ENCODE measurements at regions of chr1 and their contacts with region 1.

Region 1: DNA sequence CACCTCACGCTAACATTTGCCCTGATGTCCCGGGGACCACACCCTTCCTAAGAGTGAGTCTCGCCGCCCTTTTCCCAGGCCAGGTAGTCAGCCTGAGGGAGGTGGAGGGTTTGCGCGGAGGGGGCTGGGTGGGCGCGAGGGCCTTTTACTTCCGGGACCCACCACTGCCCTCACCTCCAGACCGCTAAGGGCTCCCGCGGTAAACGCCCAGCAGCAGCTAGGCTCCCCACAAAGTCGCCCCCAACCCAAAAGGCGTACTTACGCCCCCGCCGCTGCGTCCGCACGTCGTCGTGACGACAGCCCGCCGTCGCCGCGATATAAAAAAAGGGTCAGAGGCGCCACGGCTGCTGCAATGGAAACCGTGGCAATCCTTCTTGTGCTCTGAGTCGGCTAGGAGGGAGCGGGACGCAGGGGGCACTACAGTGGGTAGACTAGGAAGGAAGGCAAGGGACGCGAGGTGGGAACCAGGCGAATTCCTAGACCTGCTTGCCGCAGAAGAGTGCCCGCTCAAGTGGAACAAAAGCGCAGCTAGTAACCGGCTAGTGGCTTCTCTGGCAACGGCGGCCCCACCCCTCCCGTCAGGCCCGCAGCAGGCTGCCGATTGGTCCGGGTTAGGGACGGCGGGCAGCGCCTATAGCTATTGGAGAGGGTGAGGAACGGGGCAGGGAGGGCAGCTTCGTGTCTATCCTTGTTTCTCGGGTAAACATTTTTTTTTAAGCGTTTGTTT is at the start of gene ODF2L:
- DNase-seq: peak; percentile 90 to 95 (median 92)
- ATAC-seq: peak; percentile 99 to 100 (median 100)
- H3K4me3 ChIP-seq: peak within 1 kb of the TSS; percentile 55 to 95 (median 82)
- H3K27ac ChIP-seq: peak within 1 kb of the TSS in 11 of 12 donors; percentile 66 to 89 (median 81)
- H3K4me1 ChIP-seq: peaks cover 0 to 30% (median 12%) of the 10 kb centered on the region in 12 donors
- H3K27me3 ChIP-seq: no peaks in the 10 kb centered on the region
- CTCF ChIP-seq: no peak
- POLR2A ChIP-seq: peak in 1 of 2 donors; percentile 78
- total RNA-seq, gene ODF2L: 6.2 to 23.7 (median 12.3) TPM

Region 2: GRCh38 chr1:86305731-86306130 is 90.2 kb before region 1 on chr1:
- intact Hi-C with region 1: no loop called
- DNase-seq: no peak
- ATAC-seq: no peak
- H3K4me3 ChIP-seq: no peak overlapping the region
- H3K27ac ChIP-seq: no peak overlapping the region
- H3K4me1 ChIP-seq: no peaks in the 10 kb centered on the region
- H3K27me3 ChIP-seq: no peaks in the 10 kb centered on the region
- CTCF ChIP-seq: no peak
- POLR2A ChIP-seq: no peak

Region 3: DNA sequence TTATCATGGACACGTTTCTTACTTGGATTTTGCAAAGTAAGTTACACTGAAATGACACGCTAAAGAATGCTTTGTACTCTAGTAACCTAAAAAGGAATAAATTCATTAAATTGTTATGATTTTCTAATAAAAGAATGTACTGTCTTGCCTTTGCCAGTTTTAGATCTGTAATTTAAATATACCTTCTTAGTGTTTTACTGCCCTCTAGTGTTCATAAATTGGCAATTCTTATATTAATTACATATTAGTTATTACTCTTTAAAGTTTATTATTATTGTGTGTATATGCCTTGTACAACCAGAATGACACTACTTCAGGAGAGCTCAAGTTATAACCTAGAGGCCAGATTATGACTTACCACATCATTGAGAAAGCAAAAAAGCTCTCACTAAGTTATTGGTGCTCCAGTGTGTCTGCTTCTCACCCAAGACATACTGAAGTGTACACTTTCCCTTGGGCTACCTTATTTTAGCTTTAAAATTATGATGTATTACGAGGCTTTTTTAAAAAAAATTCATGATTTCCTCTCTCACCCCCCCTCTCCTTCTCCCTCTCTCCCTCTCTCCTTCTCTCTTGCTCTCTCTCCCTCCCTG is 688.4 kb after region 1 on chr1:
- intact Hi-C with region 1: loop called in 1 of 10 experiments (anchors 10 kb)
- DNase-seq: no peak
- ATAC-seq: peak in 1 of 4 donors; percentile 42
- H3K4me3 ChIP-seq: no peak overlapping the region
- H3K27ac ChIP-seq: no peak overlapping the region
- H3K4me1 ChIP-seq: peaks cover 0 to 8% (median 4%) of the 10 kb centered on the region in 12 donors
- H3K27me3 ChIP-seq: no peaks in the 10 kb centered on the region
- CTCF ChIP-seq: peak; percentile 57 to 85 (median 72)
- POLR2A ChIP-seq: no peak